AG04450 (cell line): ENCODE measurements at regions of chr19 and their contacts with region 1.

Region 1: GRCh38 chr19:48835734-48836088 is 580 bp downstream of the HSD17B14 start:
- DNase-seq: no peak
- H3K4me3 ChIP-seq: peak overlapping the region; percentile 54
- H3K27ac ChIP-seq: peak overlapping the region; percentile 53
- H3K27me3 ChIP-seq: no peaks in the 10 kb centered on the region
- CTCF ChIP-seq: peak; percentile 92

Region 2: GRCh38 chr19:48578891-48579290 is 256.8 kb before region 1 on chr19:
- CTCF ChIA-PET with region 1: no interaction called
- POLR2A ChIA-PET with region 1: no interaction called
- DNase-seq: no peak
- H3K4me3 ChIP-seq: no peak overlapping the region
- H3K27ac ChIP-seq: no peak overlapping the region
- H3K27me3 ChIP-seq: no peaks in the 10 kb centered on the region
- CTCF ChIP-seq: no peak

Region 3: GRCh38 chr19:48751845-48752497 is 83.7 kb before region 1 on chr19:
- CTCF ChIA-PET with region 1: interaction called, 12 read pairs
- POLR2A ChIA-PET with region 1: no interaction called
- DNase-seq: no peak
- H3K4me3 ChIP-seq: peak overlapping the region; percentile 20; the same call in 1 of the 2 replicates
- H3K27ac ChIP-seq: no peak overlapping the region
- H3K27me3 ChIP-seq: peaks cover 36% of the 10 kb centered on the region
- CTCF ChIP-seq: no peak

Region 4: GRCh38 chr19:48795055-48795684 is 40.5 kb before region 1 on chr19:
- CTCF ChIA-PET with region 1: interaction called, 201 read pairs
- POLR2A ChIA-PET with region 1: interaction called, 4 read pairs
- DNase-seq: peak; percentile 84
- H3K4me3 ChIP-seq: peak overlapping the region; percentile 63
- H3K27ac ChIP-seq: peak overlapping the region; percentile 87
- H3K27me3 ChIP-seq: no peaks in the 10 kb centered on the region
- CTCF ChIP-seq: peak; percentile 95

Region 5: DNA sequence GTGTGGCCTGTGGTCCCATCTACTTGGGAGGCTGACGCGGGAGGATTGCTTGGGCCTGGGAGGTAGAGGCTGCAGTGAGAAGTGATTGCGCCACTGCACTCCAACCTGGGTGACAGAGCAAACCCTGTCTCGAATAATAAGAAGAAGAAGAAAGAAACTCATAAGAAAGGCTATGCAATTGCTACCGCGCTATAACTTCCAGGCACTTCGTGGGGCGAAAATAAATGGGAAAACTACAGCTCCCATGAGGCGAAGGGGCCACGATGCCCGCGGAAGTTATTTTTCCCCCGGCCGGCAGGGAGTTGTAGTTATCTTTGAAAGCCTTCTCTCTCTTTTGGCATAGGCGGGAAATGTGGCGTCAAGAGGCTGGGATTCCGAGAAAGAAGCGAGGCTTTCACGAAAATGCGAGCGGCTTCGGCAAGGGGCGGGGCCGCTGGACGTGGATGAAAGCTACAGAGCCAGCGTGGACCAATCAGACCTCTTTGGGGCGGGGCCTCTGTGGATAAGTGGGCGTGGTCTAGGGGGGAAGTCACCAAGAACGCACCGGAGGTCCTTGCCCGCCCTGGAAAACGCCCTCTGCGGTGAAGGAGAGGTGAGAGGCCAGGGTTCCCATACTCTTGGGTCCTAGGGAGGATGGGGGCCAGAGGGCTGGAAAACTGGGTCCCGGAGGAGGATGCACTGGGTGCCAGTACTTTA is 64.2 kb after region 1 on chr19 and contains the start of gene NUCB1:
- CTCF ChIA-PET with region 1: no interaction called
- POLR2A ChIA-PET with region 1: no interaction called
- DNase-seq: peak; percentile 96
- H3K4me3 ChIP-seq: peak within 1 kb of the TSS; percentile 94
- H3K27ac ChIP-seq: peak within 1 kb of the TSS; percentile 84
- H3K27me3 ChIP-seq: no peaks in the 10 kb centered on the region
- CTCF ChIP-seq: peak; percentile 45
- polyA plus RNA-seq, gene NUCB1: 123 and 130 TPM in 2 replicates

Region 6: GRCh38 chr19:49255674-49256073 is 420.0 kb after region 1 on chr19:
- CTCF ChIA-PET with region 1: no interaction called
- POLR2A ChIA-PET with region 1: no interaction called
- DNase-seq: no peak
- H3K4me3 ChIP-seq: no peak overlapping the region
- H3K27ac ChIP-seq: no peak overlapping the region
- H3K27me3 ChIP-seq: peaks cover 18% of the 10 kb centered on the region
- CTCF ChIP-seq: no peak